ENCODE measurements at regions of chr4 and their contacts with region 1.

Region 1: DNA sequence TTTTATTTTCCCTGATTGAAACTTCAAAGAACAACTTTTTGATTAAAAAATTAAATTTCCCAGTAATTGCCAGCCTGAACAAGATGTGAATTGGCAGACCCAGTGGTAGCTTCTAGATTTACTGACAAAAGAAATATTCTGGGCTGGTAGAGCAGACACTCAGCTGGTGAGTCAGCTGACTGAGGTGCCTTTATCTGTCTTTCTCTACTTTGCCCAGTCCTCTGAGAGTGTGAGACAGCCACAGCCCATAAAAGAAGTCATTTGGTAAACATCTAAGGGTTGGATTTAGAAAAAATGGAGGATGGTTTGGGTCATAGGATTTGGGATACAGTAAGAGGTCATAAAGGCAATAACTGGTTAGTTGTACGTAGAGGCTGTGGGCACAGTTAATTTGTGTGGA is 54.5 kb downstream of the CCSER1 start:
- DNase-seq: no peak
- ATAC-seq: no peak

Region 2: DNA sequence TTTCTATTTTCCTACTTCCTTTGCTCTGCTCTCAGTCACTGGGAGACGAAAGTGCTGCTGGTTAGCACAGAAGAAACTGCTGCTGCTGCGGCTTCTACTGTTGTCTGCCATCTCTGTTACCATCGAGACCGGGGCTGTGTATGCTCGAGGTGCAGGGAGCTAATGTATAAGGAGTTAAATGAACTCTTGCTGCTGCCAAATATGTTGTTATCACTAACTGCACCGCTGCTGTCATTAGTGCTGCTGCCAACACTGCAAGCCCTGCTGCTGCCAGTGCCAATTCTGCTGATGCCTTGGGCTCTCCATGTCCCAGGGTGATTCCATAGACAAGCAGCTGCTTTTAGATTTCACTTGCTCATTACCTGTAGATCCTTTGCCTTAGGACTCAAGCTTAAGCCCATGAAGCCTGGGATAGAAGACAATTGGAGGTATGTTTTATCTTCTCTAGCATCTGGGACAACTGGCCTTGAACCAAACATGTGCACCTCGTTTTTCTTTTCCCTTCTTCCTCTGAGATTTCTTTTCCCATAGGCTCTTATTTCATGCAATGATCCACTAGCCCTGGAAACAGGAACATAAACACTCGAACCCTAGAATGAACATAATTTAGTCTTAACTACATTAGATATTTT is 53.4 kb after region 1 on chr4:
- intact Hi-C with region 1: loop called (anchors 10 kb)
- DNase-seq: peak; percentile 73
- ATAC-seq: peak; percentile 97